GM10248 (cell line): ENCODE measurements at regions of chr1 and their contacts with region 1.

Region 1: GRCh38 chr1:198667186-198667585 is 28.3 kb downstream of the PTPRC start:
- DNase-seq: no peak
- CTCF ChIP-seq: no peak

Region 2: DNA sequence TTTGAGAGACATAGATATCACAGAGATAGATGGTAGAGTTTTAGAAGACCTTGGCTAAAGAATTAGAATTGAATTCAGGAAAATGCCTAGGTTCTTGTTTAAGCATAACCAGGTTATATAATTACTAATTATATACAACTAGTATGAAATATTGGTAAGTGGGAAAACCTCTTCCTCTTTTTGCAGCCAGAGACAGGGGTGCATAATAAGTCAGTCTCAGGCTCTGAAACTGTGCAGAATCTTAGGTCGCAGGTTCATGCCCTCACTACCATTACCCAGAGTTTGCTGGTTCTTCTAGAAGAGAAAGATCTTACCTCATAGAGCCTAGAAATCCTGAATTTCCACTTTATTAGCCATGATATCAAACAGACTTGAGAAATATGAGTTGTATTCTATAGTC is 327.0 kb before region 1 on chr1:
- CTCF ChIA-PET with region 1: no interaction called
- POLR2A ChIA-PET with region 1: no interaction called
- DNase-seq: no peak
- CTCF ChIP-seq: no peak

Region 3: GRCh38 chr1:198627436-198628066 is 39.6 kb before region 1 on chr1:
- CTCF ChIA-PET with region 1: no interaction called
- POLR2A ChIA-PET with region 1: no interaction called
- DNase-seq: no peak
- CTCF ChIP-seq: no peak

Region 4: DNA sequence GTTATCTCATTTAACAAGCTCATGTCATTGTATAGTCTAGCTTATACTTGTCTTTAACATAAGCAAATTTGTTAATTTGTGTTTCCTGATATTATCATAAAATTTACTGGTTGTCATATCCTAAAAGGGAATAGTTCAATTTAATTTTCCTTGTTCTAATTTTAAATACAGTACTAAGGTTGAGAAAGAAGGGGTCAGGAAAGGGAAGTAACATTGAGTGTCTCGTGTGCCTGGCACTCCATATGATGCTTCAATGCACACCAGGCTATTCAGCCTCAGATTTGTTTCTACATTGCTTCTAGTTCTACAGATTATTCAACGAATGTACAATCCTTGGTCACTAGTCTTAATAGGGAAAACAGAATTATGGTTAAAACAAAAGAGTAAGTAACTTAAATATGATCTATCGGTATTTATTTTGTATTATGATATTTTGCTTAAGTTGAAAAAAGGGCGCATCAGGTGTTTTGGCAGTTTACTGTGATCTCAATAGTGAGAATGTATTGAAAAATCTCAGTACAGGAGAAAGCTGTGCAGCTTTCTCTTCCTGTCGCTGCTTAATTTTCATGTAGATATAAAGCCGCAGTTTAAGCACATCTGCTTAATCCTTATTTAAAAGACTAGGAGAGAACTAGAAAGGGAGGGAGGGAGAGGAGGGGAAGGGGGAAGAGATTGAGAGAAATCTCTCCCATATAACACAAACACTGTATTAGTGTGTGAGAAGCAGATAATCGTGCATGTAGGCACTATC is 15.4 kb before region 1 on chr1:
- CTCF ChIA-PET with region 1: interaction called, 12 read pairs
- POLR2A ChIA-PET with region 1: no interaction called
- DNase-seq: no peak
- CTCF ChIP-seq: no peak

Region 5: DNA sequence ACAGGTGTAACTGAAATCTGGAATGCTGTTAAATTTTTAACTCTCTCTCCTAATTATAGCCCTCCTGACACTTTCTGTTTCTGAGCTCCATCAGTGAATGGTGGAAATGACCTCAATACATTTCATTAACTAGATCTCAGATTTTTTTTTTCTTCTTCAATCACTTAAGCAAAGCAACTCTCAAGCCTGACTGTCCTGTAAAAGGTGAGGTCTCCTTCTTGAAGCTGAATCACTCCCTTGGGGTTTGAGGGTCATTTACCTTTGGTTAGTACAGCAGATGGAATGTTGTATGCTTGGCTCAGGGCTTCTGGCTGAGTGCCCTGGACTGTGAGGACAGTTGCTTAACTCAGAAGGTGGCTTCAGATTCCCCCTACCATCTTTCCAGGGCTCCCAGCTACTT is 490.3 kb after region 1 on chr1:
- CTCF ChIA-PET with region 1: no interaction called
- POLR2A ChIA-PET with region 1: no interaction called
- DNase-seq: no peak
- CTCF ChIP-seq: no peak